Transverse colon (tissue), 4 donors: ENCODE measurements at regions of chr16 and their contacts with region 1.

Region 1: GRCh38 chr16:78796221-78796866 is 696.9 kb downstream of the WWOX start:
- DNase-seq: peak; percentile 33
- H3K4me3 ChIP-seq: no peak overlapping the region
- H3K27ac ChIP-seq: no peak overlapping the region
- H3K4me1 ChIP-seq: no peaks in the 10 kb centered on the region
- H3K27me3 ChIP-seq: no peaks in the 10 kb centered on the region
- CTCF ChIP-seq: no peak
- EP300 ChIP-seq: no peak
- POLR2A ChIP-seq: no peak

Region 2: GRCh38 chr16:78503602-78504001 is 292.7 kb before region 1 on chr16:
- in situ Hi-C with region 1: loop called in 1 of 4 experiments (anchors 25 kb)
- intact Hi-C with region 1: no loop called
- DNase-seq: peak; percentile 44
- H3K4me3 ChIP-seq: no peak overlapping the region
- H3K27ac ChIP-seq: peak overlapping the region in 1 of 4 donors; percentile 78
- H3K4me1 ChIP-seq: peaks cover 6 to 15% (median 8%) of the 10 kb centered on the region in 4 donors
- H3K27me3 ChIP-seq: no peaks in the 10 kb centered on the region
- CTCF ChIP-seq: peak; percentile 82 to 89 (median 86)
- EP300 ChIP-seq: no peak
- POLR2A ChIP-seq: no peak